MCF 10A (cell line): ENCODE measurements at regions of chr11 and their contacts with region 1.

Region 1: DNA sequence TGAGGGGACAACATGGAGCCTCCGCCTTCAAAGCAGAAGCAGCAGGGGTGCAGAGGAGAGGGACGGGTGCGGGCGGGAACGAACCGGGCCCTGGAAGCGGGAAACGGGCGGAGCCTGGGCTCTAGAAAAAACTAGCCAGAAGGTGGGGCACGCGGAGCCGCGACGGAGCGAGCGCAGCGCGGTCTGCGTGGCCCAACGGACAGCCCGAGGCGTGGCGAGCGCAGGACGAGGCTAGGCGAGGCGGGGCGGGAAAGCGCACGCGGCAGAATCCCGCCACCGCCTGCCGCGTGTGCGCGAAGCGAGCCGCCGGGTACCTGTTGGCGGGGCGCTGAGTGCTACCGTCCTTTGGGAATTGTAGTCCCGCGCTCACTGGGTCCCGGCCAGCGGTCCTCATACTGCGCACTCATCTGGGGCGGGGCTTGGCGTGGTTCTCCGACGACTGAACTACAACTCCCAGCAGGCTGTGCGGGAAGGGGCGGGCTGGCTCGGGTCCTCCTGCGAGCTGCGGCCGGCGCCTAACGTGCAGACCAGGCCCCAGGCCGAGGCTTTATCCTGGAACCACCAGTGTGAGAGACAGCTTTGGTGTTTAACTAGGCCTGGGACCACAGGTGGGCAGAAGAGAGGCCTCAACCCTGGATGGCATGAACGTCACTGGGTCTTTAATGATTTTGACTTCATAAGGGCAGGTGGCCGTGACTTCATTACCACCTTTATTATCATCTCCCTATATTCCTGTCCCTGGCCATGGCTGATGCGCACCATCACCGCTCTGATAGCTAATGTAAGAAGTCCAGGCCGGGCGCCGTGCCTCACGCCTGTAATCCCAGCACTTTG is at the start of gene ATL3:
- DNase-seq: peak; percentile 98
- H3K4me3 Mint-ChIP-seq: peak within 1 kb of the TSS; percentile 84
- H3K27ac Mint-ChIP-seq: peak within 1 kb of the TSS; percentile 90
- H3K4me1 Mint-ChIP-seq: peaks cover 27% of the 10 kb centered on the region
- H3K27me3 Mint-ChIP-seq: no peaks in the 10 kb centered on the region
- CTCF ChIP-seq: no peak
- total RNA-seq, gene ATL3: 74.0 and 77.1 TPM in 2 replicates

Region 2: GRCh38 chr11:63553741-63554151 is 117.8 kb before region 1 on chr11:
- CTCF ChIA-PET with region 1: no interaction called
- POLR2A ChIA-PET with region 1: no interaction called
- intact Hi-C with region 1: no loop called
- DNase-seq: no peak
- H3K4me3 Mint-ChIP-seq: no peak overlapping the region
- H3K27ac Mint-ChIP-seq: no peak overlapping the region
- H3K4me1 Mint-ChIP-seq: no peaks in the 10 kb centered on the region
- H3K27me3 Mint-ChIP-seq: no peaks in the 10 kb centered on the region
- CTCF ChIP-seq: no peak

Region 3: DNA sequence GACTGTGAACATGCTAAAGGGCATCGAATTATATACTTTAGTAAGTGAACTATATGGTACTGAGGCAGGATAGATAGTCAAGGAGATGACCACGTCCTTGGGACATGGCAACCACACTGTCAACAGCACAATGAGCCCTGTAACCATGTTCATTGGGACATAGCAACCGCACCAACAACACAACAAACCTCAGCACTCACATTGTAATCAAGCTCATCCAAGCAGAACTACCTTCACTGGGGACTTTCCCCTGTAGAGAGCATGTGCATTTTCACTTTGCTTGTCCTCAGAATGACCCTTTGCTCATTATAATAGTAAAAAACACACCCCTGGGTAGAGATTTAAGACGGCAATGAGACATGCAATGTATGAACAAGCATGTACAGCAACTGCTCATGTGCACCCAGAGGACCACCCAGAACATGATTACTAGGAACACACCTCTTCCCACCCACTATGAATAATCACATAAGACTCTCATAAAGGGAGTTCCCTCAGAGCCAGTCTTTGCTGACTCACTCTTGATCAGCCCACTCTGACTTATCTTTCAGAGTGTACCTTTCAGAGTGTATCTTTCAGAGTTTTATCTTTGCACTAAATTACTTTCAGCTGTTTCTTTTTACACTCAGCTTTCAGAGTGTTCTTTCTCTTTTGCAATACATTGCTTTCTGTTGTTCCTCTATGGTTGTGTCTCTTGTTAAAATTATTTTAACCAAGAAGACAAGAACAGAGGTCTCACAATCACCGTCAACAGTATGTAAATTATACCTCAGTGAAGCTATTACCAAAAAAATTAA is 104.3 kb before region 1 on chr11:
- CTCF ChIA-PET with region 1: no interaction called
- POLR2A ChIA-PET with region 1: interaction called, 23 read pairs
- intact Hi-C with region 1: no loop called
- DNase-seq: peak; percentile 82
- H3K4me3 Mint-ChIP-seq: no peak overlapping the region
- H3K27ac Mint-ChIP-seq: peak overlapping the region; percentile 98
- H3K4me1 Mint-ChIP-seq: peaks cover 45% of the 10 kb centered on the region
- H3K27me3 Mint-ChIP-seq: no peaks in the 10 kb centered on the region
- CTCF ChIP-seq: no peak

Region 4: DNA sequence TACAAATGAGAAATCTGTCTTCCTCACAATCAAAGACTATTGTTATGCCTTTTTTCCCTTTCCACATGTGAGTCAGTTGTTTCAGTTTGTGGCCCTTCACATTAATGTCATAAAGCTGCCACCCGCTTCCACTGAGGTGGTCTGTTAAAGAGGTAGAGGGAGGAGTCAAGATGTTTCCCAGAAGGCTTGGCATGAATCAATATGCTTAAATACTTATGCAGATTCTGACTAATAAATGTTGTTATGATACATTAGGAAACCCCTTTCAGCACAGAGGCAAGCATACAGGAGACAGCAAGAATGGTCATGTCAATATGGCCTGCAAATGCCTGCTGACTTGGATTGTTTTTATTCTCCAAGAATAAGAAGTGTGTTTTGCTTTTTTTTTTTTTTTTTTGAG is 16.3 kb after region 1 on chr11:
- CTCF ChIA-PET with region 1: interaction called, 20 read pairs
- POLR2A ChIA-PET with region 1: interaction called, 270 read pairs
- intact Hi-C with region 1: no loop called
- DNase-seq: no peak
- H3K4me3 Mint-ChIP-seq: no peak overlapping the region
- H3K27ac Mint-ChIP-seq: no peak overlapping the region
- H3K4me1 Mint-ChIP-seq: peaks cover 25% of the 10 kb centered on the region
- H3K27me3 Mint-ChIP-seq: no peaks in the 10 kb centered on the region
- CTCF ChIP-seq: no peak